ENCODE measurements at regions of chr10 and their contacts with region 1.

Region 1: DNA sequence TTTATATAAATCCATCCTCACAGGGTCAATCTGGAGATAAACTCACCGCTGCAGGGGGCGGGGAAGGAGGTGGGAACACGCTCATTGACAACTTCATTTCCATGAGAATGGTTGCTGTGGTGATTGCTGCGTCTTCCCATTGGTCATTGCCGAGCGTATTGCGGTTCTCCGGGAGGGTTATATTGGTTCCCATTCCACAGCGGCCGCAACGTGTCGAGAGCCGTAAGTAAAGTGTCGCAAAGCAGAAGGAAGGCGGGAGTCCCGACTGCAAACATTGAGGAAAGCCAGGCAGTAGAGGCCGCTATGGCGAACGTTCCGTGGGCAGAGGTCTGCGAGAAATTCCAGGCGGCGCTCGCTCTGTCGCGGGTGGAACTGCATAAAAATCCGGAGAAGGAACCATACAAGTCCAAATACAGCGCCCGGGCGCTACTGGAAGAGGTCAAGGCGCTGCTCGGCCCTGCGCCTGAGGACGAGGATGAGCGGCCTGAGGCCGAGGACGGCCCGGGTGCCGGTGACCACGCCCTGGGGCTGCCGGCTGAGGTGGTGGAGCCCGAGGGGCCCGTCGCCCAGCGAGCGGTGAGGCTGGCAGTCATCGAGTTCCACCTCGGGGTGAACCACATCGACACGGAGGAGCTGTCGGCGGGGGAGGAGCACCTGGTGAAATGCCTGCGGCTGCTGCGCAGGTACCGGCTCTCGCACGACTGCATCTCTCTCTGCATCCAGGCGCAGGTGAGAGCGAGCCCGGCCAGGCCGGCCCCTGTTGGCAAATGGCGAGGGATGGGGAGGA is at the start of gene KIFBP:
- DNase-seq: peak; percentile 95
- H3K4me3 Mint-ChIP-seq: peak within 1 kb of the TSS; percentile 89
- H3K27ac Mint-ChIP-seq: peak within 1 kb of the TSS; percentile 91
- H3K4me1 Mint-ChIP-seq: peaks cover 41% of the 10 kb centered on the region
- H3K27me3 Mint-ChIP-seq: no peaks in the 10 kb centered on the region
- total RNA-seq, gene KIFBP: 15.0 TPM in 2 replicates

Region 2: GRCh38 chr10:68732651-68733050 is 256.1 kb before region 1 on chr10:
- intact Hi-C with region 1: no loop called
- DNase-seq: no peak
- H3K4me3 Mint-ChIP-seq: no peak overlapping the region
- H3K27ac Mint-ChIP-seq: no peak overlapping the region
- H3K4me1 Mint-ChIP-seq: peaks cover 14% of the 10 kb centered on the region
- H3K27me3 Mint-ChIP-seq: no peaks in the 10 kb centered on the region

Region 3: DNA sequence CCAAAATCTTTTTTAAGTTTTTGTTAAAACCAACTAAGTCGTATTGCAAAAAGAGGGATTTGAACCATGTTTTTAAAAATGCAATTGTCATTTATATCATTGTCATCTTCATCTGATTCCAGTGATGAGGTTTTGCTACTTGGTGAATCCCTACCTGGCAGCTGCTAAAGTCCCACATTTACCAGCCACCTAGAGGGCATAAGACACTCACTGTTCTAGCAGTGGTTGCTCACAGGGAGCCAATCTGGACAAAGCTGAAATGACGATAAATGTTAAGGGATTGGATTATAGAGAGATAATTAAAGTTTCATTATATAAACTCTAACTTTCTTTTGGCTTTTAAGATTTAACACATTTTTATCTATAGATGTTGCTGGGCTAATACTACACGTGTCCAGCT is 18.5 kb after region 1 on chr10:
- intact Hi-C with region 1: no loop called
- DNase-seq: no peak
- H3K4me3 Mint-ChIP-seq: no peak overlapping the region
- H3K27ac Mint-ChIP-seq: no peak overlapping the region
- H3K4me1 Mint-ChIP-seq: peaks cover 2% of the 10 kb centered on the region
- H3K27me3 Mint-ChIP-seq: no peaks in the 10 kb centered on the region

Region 4: GRCh38 chr10:69278446-69278963 is 289.8 kb after region 1 on chr10 and contains the start of gene HK1:
- intact Hi-C with region 1: no loop called
- DNase-seq: no peak
- H3K4me3 Mint-ChIP-seq: no peak within 1 kb of the TSS
- H3K27ac Mint-ChIP-seq: no peak within 1 kb of the TSS
- H3K4me1 Mint-ChIP-seq: no peaks in the 10 kb centered on the region
- H3K27me3 Mint-ChIP-seq: peaks cover 14% of the 10 kb centered on the region
- total RNA-seq, gene HK1: 183 and 185 TPM in 2 replicates

Region 5: DNA sequence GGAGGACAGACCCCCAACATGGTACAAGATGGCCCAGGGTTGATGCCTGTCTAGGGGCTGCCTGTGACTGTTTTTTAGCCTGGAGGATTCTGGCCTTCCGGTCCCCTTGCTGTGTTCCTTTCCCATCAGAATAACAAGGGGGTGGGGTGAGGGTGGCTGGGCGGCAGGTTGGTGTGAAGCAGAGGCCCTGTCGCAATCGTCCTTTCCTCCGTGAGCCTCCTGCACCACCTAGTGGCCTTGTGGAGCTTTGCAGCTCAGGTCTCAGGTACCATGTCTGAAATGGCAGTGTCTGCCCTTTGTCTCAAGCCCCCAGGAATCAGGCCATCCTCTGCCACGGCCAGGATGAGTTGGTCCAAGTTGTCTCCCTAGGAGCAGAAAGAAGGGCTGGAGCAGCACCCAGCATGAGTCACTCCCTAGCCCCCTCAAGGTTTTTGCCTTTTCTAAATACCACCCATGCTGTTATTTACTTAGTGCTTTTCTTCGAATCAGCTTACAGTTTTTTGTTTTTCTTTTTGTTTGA is 403.8 kb after region 1 on chr10:
- intact Hi-C with region 1: loop called (anchors 10 kb)
- DNase-seq: peak; percentile 95
- H3K4me3 Mint-ChIP-seq: no peak overlapping the region
- H3K27ac Mint-ChIP-seq: peak overlapping the region; percentile 67
- H3K4me1 Mint-ChIP-seq: peaks cover 27% of the 10 kb centered on the region
- H3K27me3 Mint-ChIP-seq: no peaks in the 10 kb centered on the region